ENCODE measurements at regions of chr17 and their contacts with region 1.

Region 1: GRCh38 chr17:4594931-4595684 is 10.8 kb downstream of the SMTNL2 start:
- DNase-seq: peak; percentile 39
- H3K4me3 ChIP-seq: no peak overlapping the region
- H3K27ac ChIP-seq: no peak overlapping the region
- H3K4me1 ChIP-seq: no peaks in the 10 kb centered on the region
- H3K27me3 ChIP-seq: no peaks in the 10 kb centered on the region
- CTCF ChIP-seq: peak; percentile 38

Region 2: GRCh38 chr17:4658478-4659305 is 63.6 kb after region 1 on chr17:
- intact Hi-C with region 1: loop called (anchors 10 kb)
- DNase-seq: no peak
- H3K4me3 ChIP-seq: no peak overlapping the region
- H3K27ac ChIP-seq: no peak overlapping the region
- H3K4me1 ChIP-seq: no peaks in the 10 kb centered on the region
- H3K27me3 ChIP-seq: no peaks in the 10 kb centered on the region
- CTCF ChIP-seq: no peak